ENCODE measurements at regions of chr17 and their contacts with region 1.

Region 1: GRCh38 chr17:75319904-75320691 is 30.9 kb upstream of the SLC25A19 start:
- DNase-seq: no peak
- ATAC-seq: no peak

Region 2: GRCh38 chr17:75261336-75262111 is 58.6 kb before region 1 on chr17 and contains the starts of genes GGA3 and MRPS7:
- intact Hi-C with region 1: no loop called
- DNase-seq: peak; percentile 98
- ATAC-seq: peak; percentile 98
- total RNA-seq, gene GGA3: 26.2 TPM
- total RNA-seq, gene MRPS7: 132 TPM

Region 3: GRCh38 chr17:75412455-75413317 is 92.6 kb after region 1 on chr17:
- intact Hi-C with region 1: loop called (anchors 5 kb)
- DNase-seq: no peak
- ATAC-seq: peak; percentile 51

Region 4: GRCh38 chr17:75504347-75504964 is 184.4 kb after region 1 on chr17:
- intact Hi-C with region 1: no loop called
- DNase-seq: peak; percentile 44
- ATAC-seq: peak; percentile 16